ENCODE measurements at regions of chr19 and their contacts with region 1.

Region 1: GRCh38 chr19:19063183-19064097 is at the start of gene SLC25A42:
- DNase-seq: peak; percentile 98 to 100 (median 100)
- H3K4me3 ChIP-seq: peak within 1 kb of the TSS; percentile 58 to 98 (median 82)
- H3K27ac ChIP-seq: peak within 1 kb of the TSS in 57 of 59 donors; percentile 8 to 94 (median 87)
- H3K27me3 ChIP-seq: no peaks in the 10 kb centered on the region
- CTCF ChIP-seq: peak in 15 of 56 donors; percentile 4 to 39 (median 11)
- total RNA-seq, gene SLC25A42: 17.0 to 52.0 (median 27.3) TPM

Region 2: DNA sequence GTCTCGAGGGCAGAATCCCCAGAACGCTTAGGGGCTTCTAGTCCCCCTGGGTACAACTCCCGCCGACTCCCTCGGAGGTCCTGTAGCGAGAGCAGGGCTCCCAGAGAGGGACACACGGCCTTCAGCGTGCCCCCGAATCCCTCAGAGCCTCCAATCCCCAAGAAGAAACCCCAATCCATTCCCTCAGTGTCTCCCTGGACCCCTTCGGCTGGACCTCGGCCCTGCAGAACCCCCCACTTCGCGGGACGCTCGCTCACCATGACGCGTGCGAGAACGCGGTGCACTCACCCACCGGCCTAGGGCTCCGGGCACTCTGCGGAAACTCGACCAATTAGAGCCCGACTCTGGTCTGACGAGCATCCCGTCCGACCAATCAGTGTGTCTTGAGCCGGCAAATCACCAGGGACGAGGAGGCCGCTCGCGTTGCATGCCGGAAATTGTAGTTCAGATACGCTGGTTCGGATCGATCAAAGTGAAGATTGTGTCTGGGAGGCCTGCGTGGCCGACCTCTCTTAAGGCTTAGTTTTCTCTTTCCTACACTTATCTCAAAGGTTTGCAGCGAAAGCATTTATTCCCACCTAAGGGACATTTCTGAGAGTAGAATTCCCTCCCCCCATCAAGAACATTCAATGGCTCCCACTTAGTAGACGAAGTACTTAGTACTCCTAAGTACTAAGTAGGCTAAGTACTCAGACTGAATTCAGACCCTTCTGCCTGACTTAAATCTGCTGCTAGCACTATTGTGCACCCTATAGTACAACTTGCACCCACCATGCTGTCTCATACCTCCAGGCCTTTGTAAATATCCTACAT is 74.9 kb after region 1 on chr19 and contains the start of gene TMEM161A:
- intact Hi-C with region 1: loop called (anchors 5 kb)
- DNase-seq: peak; percentile 96 to 98 (median 98)
- H3K4me3 ChIP-seq: peak within 1 kb of the TSS; percentile 64 to 100 (median 91)
- H3K27ac ChIP-seq: peak within 1 kb of the TSS in 23 of 59 donors; percentile 5 to 83 (median 54)
- H3K27me3 ChIP-seq: no peaks in the 10 kb centered on the region
- CTCF ChIP-seq: peak in 31 of 56 donors; percentile 6 to 60 (median 27)
- total RNA-seq, gene TMEM161A: 14.9 to 46.0 (median 24.7) TPM

Measured in dorsolateral prefrontal cortex (tissue), 120 donors.